ENCODE measurements at regions of chr2 and their contacts with region 1.

Region 1: GRCh38 chr2:68537809-68538208 is 70.4 kb downstream of the APLF start:
- DNase-seq: no peak

Region 2: DNA sequence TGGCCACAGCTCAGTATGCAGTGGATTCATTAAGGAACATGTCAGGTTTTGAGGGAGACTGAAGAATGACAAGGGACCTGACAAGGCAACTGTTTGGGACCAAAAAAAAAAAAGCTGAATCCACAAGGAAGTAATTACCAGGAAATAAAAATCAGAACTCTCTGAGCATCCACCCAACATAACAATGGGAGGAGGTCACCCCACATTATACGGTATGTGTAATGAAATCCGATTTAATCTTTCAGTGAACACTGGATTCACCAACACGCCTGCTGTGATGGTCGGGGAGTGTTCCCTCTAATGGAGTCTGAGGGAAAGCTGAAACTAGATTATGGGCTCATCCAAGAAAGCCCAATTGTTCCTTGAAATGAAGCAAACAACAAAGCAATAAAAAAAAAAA is 811.4 kb before region 1 on chr2:
- intact Hi-C with region 1: no loop called
- DNase-seq: no peak

Region 3: DNA sequence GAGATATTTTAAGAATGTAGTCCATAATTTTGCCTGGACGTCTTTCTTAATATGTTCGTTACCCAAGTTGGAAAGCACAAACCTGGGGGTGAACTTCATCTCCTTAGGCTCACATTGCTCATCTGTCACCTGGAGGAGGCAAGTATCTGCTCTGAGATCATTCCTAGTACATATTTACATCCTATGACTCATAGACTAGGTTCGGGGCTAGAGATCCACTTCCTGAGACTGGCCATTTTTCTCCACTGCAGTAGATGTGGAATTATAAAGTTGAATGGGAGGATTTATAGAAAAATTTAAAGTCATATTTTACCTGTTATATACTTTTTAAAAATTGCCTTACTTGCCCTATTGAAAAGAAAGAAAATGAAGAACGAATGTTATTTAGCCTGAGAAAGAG is 28.0 kb after region 1 on chr2:
- intact Hi-C with region 1: loop called in 1 of 2 experiments (anchors 2 kb)
- DNase-seq: no peak

Region 4: DNA sequence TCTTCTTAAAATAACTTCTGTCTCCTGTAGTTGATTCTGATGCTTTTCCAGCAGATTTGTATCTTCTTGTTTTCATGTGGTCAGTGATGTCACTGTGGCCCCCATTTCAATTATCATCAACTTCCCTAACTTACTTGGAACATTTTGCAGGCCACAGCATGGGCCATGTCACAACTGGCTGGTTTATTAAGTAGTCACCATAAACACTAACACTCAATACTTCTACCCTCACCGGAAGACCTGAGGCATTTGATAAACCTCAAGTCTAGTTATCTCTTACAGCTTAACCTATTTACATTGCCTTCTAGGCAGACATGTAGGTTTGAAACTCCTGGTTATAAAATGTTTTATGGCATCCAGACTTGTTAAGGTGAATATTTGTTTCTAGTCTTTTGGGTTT is 68.1 kb after region 1 on chr2:
- intact Hi-C with region 1: no loop called
- DNase-seq: no peak

Measured in posterior vena cava (tissue), 2 donors.